Activated CD4-positive, alpha-beta memory T cell treated with anti-CD3 and anti-CD28 coated beads for 36 hours (primary cell): ENCODE measurements at regions of chr17 and their contacts with region 1.

Region 1: GRCh38 chr17:76623271-76624146 is 20.0 kb downstream of the ST6GALNAC1 start:
- DNase-seq: peak; percentile 85
- H3K4me3 Mint-ChIP-seq: no peak overlapping the region
- H3K27ac Mint-ChIP-seq: no peak overlapping the region
- H3K4me1 Mint-ChIP-seq: peaks cover 5% of the 10 kb centered on the region
- H3K27me3 Mint-ChIP-seq: no peaks in the 10 kb centered on the region

Region 2: GRCh38 chr17:76506408-76507349 is 116.8 kb before region 1 on chr17:
- CTCF ChIA-PET with region 1: interaction called, 16 read pairs
- POLR2A ChIA-PET with region 1: no interaction called
- intact Hi-C with region 1: no loop called
- DNase-seq: peak; percentile 93
- H3K4me3 Mint-ChIP-seq: no peak overlapping the region
- H3K27ac Mint-ChIP-seq: no peak overlapping the region
- H3K4me1 Mint-ChIP-seq: peaks cover 12% of the 10 kb centered on the region
- H3K27me3 Mint-ChIP-seq: no peaks in the 10 kb centered on the region

Region 3: GRCh38 chr17:76523084-76524037 is 100.1 kb before region 1 on chr17:
- CTCF ChIA-PET with region 1: interaction called, 112 read pairs
- POLR2A ChIA-PET with region 1: no interaction called
- intact Hi-C with region 1: loop called (anchors 1 kb)
- DNase-seq: peak; percentile 88
- H3K4me3 Mint-ChIP-seq: no peak overlapping the region
- H3K27ac Mint-ChIP-seq: no peak overlapping the region
- H3K4me1 Mint-ChIP-seq: peaks cover 17% of the 10 kb centered on the region
- H3K27me3 Mint-ChIP-seq: peaks cover 2% of the 10 kb centered on the region

Region 4: DNA sequence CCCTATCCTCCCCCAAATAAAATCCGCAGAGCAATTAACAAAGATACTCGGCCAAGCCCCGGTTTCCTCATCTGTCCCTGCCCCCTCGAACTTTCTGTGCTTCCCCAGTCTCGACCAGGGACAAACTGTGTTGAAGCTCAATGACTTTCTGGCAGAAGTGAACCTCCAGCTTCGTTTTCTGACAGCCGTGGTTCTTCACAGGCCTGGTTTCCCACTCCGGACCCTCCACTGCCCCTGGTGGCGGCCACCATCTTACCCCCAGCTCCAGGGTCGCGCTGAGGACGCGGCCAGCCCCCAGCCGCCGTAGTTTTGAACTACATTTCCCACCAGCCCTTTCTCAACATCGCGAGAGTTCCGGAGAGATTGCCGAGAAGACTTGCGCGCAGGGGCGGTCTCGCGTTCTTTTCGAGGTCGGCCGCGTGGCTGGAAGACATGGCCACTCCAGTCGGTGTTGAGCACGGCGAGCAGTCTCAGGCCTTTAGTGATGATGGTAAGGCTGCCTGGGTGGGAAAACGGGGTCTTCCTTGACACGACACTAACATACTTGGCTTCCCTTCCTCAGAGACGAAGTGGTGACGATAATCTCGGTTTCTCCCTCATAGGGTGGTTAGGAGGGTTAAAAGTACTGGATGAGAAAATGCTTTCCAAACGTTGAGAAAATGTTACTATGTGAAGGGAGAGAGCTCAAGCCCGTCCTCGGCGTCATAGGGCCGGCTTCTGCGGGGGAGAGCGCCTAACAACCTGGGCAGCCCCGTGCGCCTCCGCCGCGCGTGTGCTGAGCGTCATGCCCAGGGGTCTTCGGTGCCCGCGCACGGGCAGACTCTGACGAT is 65.9 kb before region 1 on chr17:
- CTCF ChIA-PET with region 1: interaction called, 74 read pairs
- POLR2A ChIA-PET with region 1: interaction called, 4 read pairs
- intact Hi-C with region 1: loop called (anchors 1 kb)
- DNase-seq: peak; percentile 96
- H3K4me3 Mint-ChIP-seq: peak overlapping the region; percentile 97
- H3K27ac Mint-ChIP-seq: peak overlapping the region; percentile 99
- H3K4me1 Mint-ChIP-seq: peaks cover 48% of the 10 kb centered on the region
- H3K27me3 Mint-ChIP-seq: no peaks in the 10 kb centered on the region

Region 5: GRCh38 chr17:76585818-76586593 is 37.5 kb before region 1 on chr17 and contains the start of gene ST6GALNAC2:
- CTCF ChIA-PET with region 1: interaction called, 13 read pairs
- POLR2A ChIA-PET with region 1: no interaction called
- intact Hi-C with region 1: no loop called
- DNase-seq: peak; percentile 53
- H3K4me3 Mint-ChIP-seq: peak within 1 kb of the TSS; percentile 57
- H3K27ac Mint-ChIP-seq: no peak within 1 kb of the TSS
- H3K4me1 Mint-ChIP-seq: peaks cover 13% of the 10 kb centered on the region
- H3K27me3 Mint-ChIP-seq: peaks cover 46% of the 10 kb centered on the region
- total RNA-seq, gene ST6GALNAC2: 0.19 to 0.51 TPM

Region 6: GRCh38 chr17:76612977-76613851 is 10.3 kb before region 1 on chr17:
- CTCF ChIA-PET with region 1: interaction called, 13 read pairs
- POLR2A ChIA-PET with region 1: interaction called, 4 read pairs
- intact Hi-C with region 1: no loop called
- DNase-seq: no peak
- H3K4me3 Mint-ChIP-seq: no peak overlapping the region
- H3K27ac Mint-ChIP-seq: no peak overlapping the region
- H3K4me1 Mint-ChIP-seq: no peaks in the 10 kb centered on the region
- H3K27me3 Mint-ChIP-seq: peaks cover 2% of the 10 kb centered on the region

Region 7: GRCh38 chr17:76681222-76682137 is 58.0 kb after region 1 on chr17:
- CTCF ChIA-PET with region 1: interaction called, 34 read pairs
- POLR2A ChIA-PET with region 1: no interaction called
- intact Hi-C with region 1: loop called (anchors 10 kb)
- DNase-seq: peak; percentile 80
- H3K4me3 Mint-ChIP-seq: no peak overlapping the region
- H3K27ac Mint-ChIP-seq: no peak overlapping the region
- H3K4me1 Mint-ChIP-seq: peaks cover 3% of the 10 kb centered on the region
- H3K27me3 Mint-ChIP-seq: no peaks in the 10 kb centered on the region